Heart right ventricle (tissue), 16 donors: ENCODE measurements at regions of chr2 and their contacts with region 1.

Region 1: GRCh38 chr2:22930781-22931180 is 454.2 kb upstream of the KLHL29 start:
- DNase-seq: no peak
- ATAC-seq: no peak
- H3K4me3 ChIP-seq: no peak overlapping the region
- H3K27ac ChIP-seq: no peak overlapping the region
- H3K4me1 ChIP-seq: no peaks in the 10 kb centered on the region
- H3K27me3 ChIP-seq: peaks cover 0 to 14% (median 0%) of the 10 kb centered on the region in 7 donors
- CTCF ChIP-seq: no peak

Region 2: GRCh38 chr2:21059885-21060610 is 1870.7 kb before region 1 on chr2:
- intact Hi-C with region 1: loop called in 1 of 10 experiments (anchors 5 kb)
- DNase-seq: no peak
- ATAC-seq: no peak
- H3K4me3 ChIP-seq: no peak overlapping the region
- H3K27ac ChIP-seq: no peak overlapping the region
- H3K4me1 ChIP-seq: no peaks in the 10 kb centered on the region
- H3K27me3 ChIP-seq: peaks cover 0 to 21% (median 4%) of the 10 kb centered on the region in 7 donors
- CTCF ChIP-seq: no peak

Region 3: GRCh38 chr2:22777484-22777883 is 153.3 kb before region 1 on chr2:
- intact Hi-C with region 1: no loop called
- DNase-seq: no peak
- ATAC-seq: no peak
- H3K4me3 ChIP-seq: no peak overlapping the region
- H3K27ac ChIP-seq: no peak overlapping the region
- H3K4me1 ChIP-seq: no peaks in the 10 kb centered on the region
- H3K27me3 ChIP-seq: peaks cover 0 to 5% (median 0%) of the 10 kb centered on the region in 7 donors
- CTCF ChIP-seq: no peak